HepG2 (cell line): ENCODE measurements at regions of chr17 and their contacts with region 1.

Region 1: GRCh38 chr17:2672026-2672425 is 39.5 kb downstream of the CLUH start:
- DNase-seq: peak; percentile 70
- ATAC-seq: peak; percentile 85
- H3K4me3 ChIP-seq: no peak overlapping the region
- H3K27ac ChIP-seq: no peak overlapping the region
- H3K4me1 ChIP-seq: peaks cover 15% of the 10 kb centered on the region; the same call in 1 of the 2 replicates
- H3K27me3 ChIP-seq: no peaks in the 10 kb centered on the region
- CTCF ChIP-seq: no peak
- EP300 ChIP-seq: no peak
- POLR2A ChIP-seq: no peak
- RAD21 ChIP-seq: no peak

Region 2: GRCh38 chr17:2511462-2512369 is 160.3 kb before region 1 on chr17 and contains the start of gene METTL16:
- CTCF ChIA-PET with region 1: no interaction called
- POLR2A ChIA-PET with region 1: no interaction called
- in situ Hi-C with region 1: no loop called
- intact Hi-C with region 1: loop called (anchors 10 kb)
- DNase-seq: peak; percentile 97
- ATAC-seq: peak; percentile 98
- H3K4me3 ChIP-seq: peak within 1 kb of the TSS; percentile 70 to 88 (median 76)
- H3K27ac ChIP-seq: peak within 1 kb of the TSS; percentile 91
- H3K4me1 ChIP-seq: peaks cover 45% of the 10 kb centered on the region
- H3K27me3 ChIP-seq: no peaks in the 10 kb centered on the region; a peak in 1 of 5 replicates
- CTCF ChIP-seq: no peak; the same call in 1 of the 2 replicates
- EP300 ChIP-seq: no peak
- POLR2A ChIP-seq: peak; percentile 80 to 92
- RAD21 ChIP-seq: peak; percentile 15; the same call in 1 of the 2 replicates
- total RNA-seq, gene METTL16: 18.5 and 28.9 TPM in 2 replicates

Region 3: DNA sequence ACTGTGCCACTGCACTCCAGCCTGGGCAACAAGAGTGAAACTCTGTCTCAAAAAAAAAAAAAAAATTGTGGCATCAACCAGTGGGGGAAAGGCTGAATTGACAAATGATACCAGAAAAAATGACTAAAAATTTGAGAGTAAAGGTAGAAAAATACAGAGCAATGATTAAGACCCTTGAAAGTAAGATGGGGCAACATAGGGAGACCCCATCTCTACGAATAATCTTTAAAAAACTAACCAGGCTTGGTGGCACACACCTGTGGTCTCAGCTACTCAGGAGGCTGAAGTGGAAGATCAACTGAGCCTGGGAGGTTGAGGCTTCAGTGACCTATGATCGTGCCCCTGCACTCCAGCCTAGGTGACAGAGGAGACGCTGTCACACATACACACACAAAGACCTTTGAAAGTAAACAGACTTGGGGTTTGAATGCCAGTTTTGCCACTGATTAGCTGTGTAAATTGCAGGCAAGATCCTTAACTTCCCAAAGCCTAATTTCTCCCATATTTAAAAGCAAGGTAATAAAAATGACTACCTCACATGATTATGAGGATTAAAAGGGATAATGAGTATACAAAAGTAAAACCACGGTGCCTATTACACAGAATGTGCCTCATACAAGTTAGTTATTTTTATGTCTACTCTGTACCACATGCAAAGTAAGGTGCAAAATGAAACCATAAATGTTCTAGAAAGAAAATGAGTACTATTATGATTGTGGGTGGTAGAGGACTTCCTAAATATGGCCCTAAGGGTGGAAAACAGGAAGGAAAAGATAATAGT is 100.3 kb before region 1 on chr17:
- CTCF ChIA-PET with region 1: no interaction called
- POLR2A ChIA-PET with region 1: no interaction called
- in situ Hi-C with region 1: no loop called
- intact Hi-C with region 1: loop called (anchors 10 kb)
- DNase-seq: no peak
- ATAC-seq: peak; percentile 60
- H3K4me3 ChIP-seq: peak overlapping the region in 2 of 3 experiments; percentile 1 to 23; a peak in 2 of 6 replicates
- H3K27ac ChIP-seq: no peak overlapping the region
- H3K4me1 ChIP-seq: peaks cover 12% of the 10 kb centered on the region
- H3K27me3 ChIP-seq: no peaks in the 10 kb centered on the region; a peak in 1 of 5 replicates
- CTCF ChIP-seq: no peak
- EP300 ChIP-seq: no peak
- POLR2A ChIP-seq: no peak
- RAD21 ChIP-seq: no peak